ENCODE measurements at regions of chr22 and their contacts with region 1.

Region 1: GRCh38 chr22:39319270-39320022 is at the start of gene RPL3:
- DNase-seq: peak; percentile 96 to 98 (median 97)
- H3K4me3 ChIP-seq: peak within 1 kb of the TSS; percentile 60 to 95 (median 79)
- H3K27ac ChIP-seq: peak within 1 kb of the TSS; percentile 91 to 100 (median 99)
- H3K27me3 ChIP-seq: no peaks in the 10 kb centered on the region
- CTCF ChIP-seq: peak in 48 of 56 donors; percentile 25 to 72 (median 50)
- total RNA-seq, gene RPL3: 562 to 963 (median 699) TPM

Region 2: GRCh38 chr22:38777087-38777671 is 542.3 kb before region 1 on chr22:
- intact Hi-C with region 1: loop called in 1 of 2 experiments (anchors 10 kb)
- DNase-seq: peak in 7 of 10 donors; percentile 50 to 83 (median 72)
- H3K4me3 ChIP-seq: no peak overlapping the region
- H3K27ac ChIP-seq: peak overlapping the region in 38 of 59 donors; percentile 0 to 80 (median 52)
- H3K27me3 ChIP-seq: no peaks in the 10 kb centered on the region
- CTCF ChIP-seq: no peak

Region 3: DNA sequence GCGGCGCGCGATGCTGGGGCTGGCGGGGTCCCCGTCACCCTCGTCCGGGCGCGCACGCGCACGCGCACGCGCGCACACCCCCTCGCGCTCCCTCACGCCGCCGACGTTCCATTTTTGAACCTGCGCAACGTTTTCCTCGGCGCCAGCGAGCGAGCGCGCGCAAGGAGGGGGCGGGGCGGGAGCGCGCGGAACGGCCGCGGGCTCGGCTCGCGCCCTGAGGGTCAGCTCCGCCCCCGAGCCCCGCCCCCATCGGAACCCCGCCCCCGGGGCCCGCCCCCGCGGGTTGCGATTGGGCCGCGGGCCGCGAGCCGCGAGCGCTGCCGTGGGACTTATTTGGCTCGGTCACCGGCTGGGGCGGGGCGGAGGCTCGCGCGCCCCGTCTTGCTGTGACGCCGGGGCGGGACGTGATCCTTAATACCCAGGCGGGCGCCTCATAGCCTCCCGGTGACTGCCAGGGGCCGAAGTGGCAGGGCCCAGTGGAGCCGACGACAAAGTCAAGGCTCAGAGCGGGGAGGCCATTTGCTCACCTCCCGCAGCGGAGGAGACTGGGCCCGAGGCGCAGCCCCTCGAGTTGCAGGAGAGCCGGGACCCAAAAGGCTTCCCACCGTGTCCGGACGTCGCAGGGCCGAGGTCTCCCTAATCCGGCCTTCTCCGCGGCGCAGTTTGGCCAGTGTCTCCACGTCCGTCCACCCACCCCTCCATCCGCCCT is 166.8 kb before region 1 on chr22 and contains the start of gene CBX7:
- intact Hi-C with region 1: loop called in 1 of 2 experiments (anchors 1 kb)
- DNase-seq: peak; percentile 92 to 96 (median 94)
- H3K4me3 ChIP-seq: peak within 1 kb of the TSS; percentile 71 to 99 (median 96)
- H3K27ac ChIP-seq: peak within 1 kb of the TSS; percentile 92 to 100 (median 99)
- H3K27me3 ChIP-seq: no peaks in the 10 kb centered on the region
- CTCF ChIP-seq: peak in 17 of 56 donors; percentile 7 to 43 (median 21)
- total RNA-seq, gene CBX7: 112 to 229 (median 170) TPM

Region 4: DNA sequence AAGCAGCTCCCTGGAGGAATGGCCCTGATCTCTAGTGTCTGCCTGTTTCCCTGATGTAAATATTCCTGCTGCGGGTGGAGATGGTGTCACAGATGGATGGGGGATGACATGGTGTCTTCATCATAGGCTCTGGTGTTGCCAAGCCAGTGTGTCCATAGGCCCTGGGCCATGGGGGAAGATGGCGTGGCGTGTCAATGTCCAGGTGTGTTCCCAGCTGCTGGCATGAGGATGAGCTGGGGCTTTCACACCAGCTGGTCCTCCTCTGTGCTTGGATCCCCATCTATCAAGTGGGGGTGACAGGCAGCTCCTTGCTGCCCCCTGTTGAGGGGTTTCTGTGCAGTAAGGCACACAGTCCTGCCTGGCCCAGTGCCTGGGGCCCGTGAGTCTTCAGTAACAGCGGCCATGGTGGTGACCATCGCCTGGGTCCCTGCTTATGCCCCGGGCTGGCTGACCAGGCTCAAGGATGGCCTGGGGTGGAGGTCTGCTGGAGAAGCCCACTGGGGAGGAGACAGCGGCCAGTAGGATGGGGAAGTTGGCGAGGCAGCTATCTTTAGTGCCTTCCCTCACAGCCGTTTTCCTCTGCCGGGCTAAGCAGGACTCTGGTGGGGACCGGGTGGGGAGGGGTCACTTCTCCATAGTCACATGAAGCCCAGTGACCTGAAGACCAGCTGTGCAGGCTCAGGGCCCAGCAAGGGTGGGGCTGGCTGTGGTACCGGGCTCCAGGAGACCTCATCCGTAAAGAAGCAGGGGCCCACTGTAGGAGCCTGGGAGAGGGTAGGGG is 12.7 kb before region 1 on chr22:
- intact Hi-C with region 1: no loop called
- DNase-seq: peak in 1 of 10 donors; percentile 37
- H3K4me3 ChIP-seq: no peak overlapping the region
- H3K27ac ChIP-seq: peak overlapping the region in 11 of 59 donors; percentile 12 to 53 (median 29)
- H3K27me3 ChIP-seq: no peaks in the 10 kb centered on the region
- CTCF ChIP-seq: peak in 44 of 56 donors; percentile 11 to 49 (median 34)

Region 5: GRCh38 chr22:39349506-39349966 is 30.1 kb after region 1 on chr22:
- intact Hi-C with region 1: loop called in 1 of 2 experiments (anchors 1 kb)
- DNase-seq: peak in 5 of 10 donors; percentile 22 to 74 (median 32)
- H3K4me3 ChIP-seq: peak overlapping the region; percentile 58 to 94 (median 83)
- H3K27ac ChIP-seq: peak overlapping the region; percentile 63 to 98 (median 91)
- H3K27me3 ChIP-seq: no peaks in the 10 kb centered on the region
- CTCF ChIP-seq: no peak

Region 6: GRCh38 chr22:39520054-39520891 is 200.8 kb after region 1 on chr22 and contains the start of gene ATF4:
- intact Hi-C with region 1: loop called in 1 of 2 experiments (anchors 5 kb)
- DNase-seq: peak; percentile 87 to 96 (median 94)
- H3K4me3 ChIP-seq: peak within 1 kb of the TSS; percentile 68 to 100 (median 99)
- H3K27ac ChIP-seq: peak within 1 kb of the TSS; percentile 91 to 100 (median 99)
- H3K27me3 ChIP-seq: no peaks in the 10 kb centered on the region
- CTCF ChIP-seq: peak in 2 of 56 donors; percentile 34 to 44
- total RNA-seq, gene ATF4: 110 to 287 (median 161) TPM